ENCODE measurements at regions of chr1 and their contacts with region 1.

Region 1: GRCh38 chr1:101371259-101371658 is 134.4 kb downstream of the S1PR1 start:
- DNase-seq: peak; percentile 79
- H3K4me3 Mint-ChIP-seq: peak overlapping the region; percentile 41
- H3K27ac Mint-ChIP-seq: no peak overlapping the region
- H3K4me1 Mint-ChIP-seq: peaks cover 13% of the 10 kb centered on the region
- H3K27me3 Mint-ChIP-seq: peaks cover 21% of the 10 kb centered on the region

Region 2: GRCh38 chr1:101293461-101294051 is 77.7 kb before region 1 on chr1:
- intact Hi-C with region 1: loop called (anchors 1 kb)
- DNase-seq: peak; percentile 76
- H3K4me3 Mint-ChIP-seq: peak overlapping the region; percentile 20
- H3K27ac Mint-ChIP-seq: peak overlapping the region; percentile 77
- H3K4me1 Mint-ChIP-seq: peaks cover 53% of the 10 kb centered on the region
- H3K27me3 Mint-ChIP-seq: peaks cover 24% of the 10 kb centered on the region

Region 3: DNA sequence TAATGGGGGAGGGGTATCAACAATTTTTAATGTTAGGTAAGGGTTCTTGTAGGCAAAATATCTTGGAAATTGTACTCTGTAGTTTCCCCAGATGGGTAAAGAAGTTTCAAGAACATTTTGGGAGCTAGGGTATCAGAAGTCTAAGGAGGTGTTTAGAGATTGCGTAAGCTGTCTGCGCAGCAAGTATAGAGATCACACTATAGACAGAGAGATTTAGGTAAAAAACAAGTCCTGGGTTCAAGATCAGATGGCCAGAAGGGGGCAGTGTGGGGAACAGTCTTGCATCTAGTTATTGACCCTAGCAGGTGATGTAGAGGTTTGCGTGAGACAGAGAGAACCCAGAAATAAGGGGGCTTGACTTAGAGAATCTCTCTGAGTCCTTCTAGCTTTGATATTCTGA is 53.7 kb before region 1 on chr1:
- intact Hi-C with region 1: no loop called
- DNase-seq: no peak
- H3K4me3 Mint-ChIP-seq: no peak overlapping the region
- H3K27ac Mint-ChIP-seq: no peak overlapping the region
- H3K4me1 Mint-ChIP-seq: peaks cover 17% of the 10 kb centered on the region
- H3K27me3 Mint-ChIP-seq: peaks cover 37% of the 10 kb centered on the region

Region 4: GRCh38 chr1:101388904-101389546 is 17.8 kb after region 1 on chr1:
- intact Hi-C with region 1: loop called (anchors 1 kb)
- DNase-seq: peak; percentile 72
- H3K4me3 Mint-ChIP-seq: no peak overlapping the region
- H3K27ac Mint-ChIP-seq: no peak overlapping the region
- H3K4me1 Mint-ChIP-seq: peaks cover 7% of the 10 kb centered on the region
- H3K27me3 Mint-ChIP-seq: peaks cover 9% of the 10 kb centered on the region

Region 5: GRCh38 chr1:101451888-101452287 is 80.6 kb after region 1 on chr1:
- intact Hi-C with region 1: loop called (anchors 2 kb)
- DNase-seq: peak; percentile 55
- H3K4me3 Mint-ChIP-seq: no peak overlapping the region
- H3K27ac Mint-ChIP-seq: peak overlapping the region; percentile 23
- H3K4me1 Mint-ChIP-seq: peaks cover 29% of the 10 kb centered on the region
- H3K27me3 Mint-ChIP-seq: peaks cover 19% of the 10 kb centered on the region